Activated CD8-positive, alpha-beta memory T cell treated with anti-CD3 and anti-CD28 coated beads, Interleukin-2, amount 10 ng/mL, durations not matched to agents 7 days and 5 days (primary cell): ENCODE measurements at regions of chr4 and their contacts with region 1.

Region 1: GRCh38 chr4:140085062-140085622 is 68.8 kb downstream of the MAML3 start:
- DNase-seq: no peak
- ATAC-seq: no peak
- H3K4me3 Mint-ChIP-seq: no peak overlapping the region
- H3K27ac Mint-ChIP-seq: no peak overlapping the region
- H3K4me1 Mint-ChIP-seq: peaks cover 20% of the 10 kb centered on the region
- H3K27me3 Mint-ChIP-seq: no peaks in the 10 kb centered on the region

Region 2: GRCh38 chr4:140071806-140072205 is 13.3 kb before region 1 on chr4:
- CTCF ChIA-PET with region 1: interaction called, 12 read pairs
- DNase-seq: peak; percentile 90
- ATAC-seq: peak; percentile 79
- H3K4me3 Mint-ChIP-seq: peak overlapping the region; percentile 61
- H3K27ac Mint-ChIP-seq: peak overlapping the region; percentile 86
- H3K4me1 Mint-ChIP-seq: peaks cover 51% of the 10 kb centered on the region
- H3K27me3 Mint-ChIP-seq: peaks cover 41% of the 10 kb centered on the region

Region 3: DNA sequence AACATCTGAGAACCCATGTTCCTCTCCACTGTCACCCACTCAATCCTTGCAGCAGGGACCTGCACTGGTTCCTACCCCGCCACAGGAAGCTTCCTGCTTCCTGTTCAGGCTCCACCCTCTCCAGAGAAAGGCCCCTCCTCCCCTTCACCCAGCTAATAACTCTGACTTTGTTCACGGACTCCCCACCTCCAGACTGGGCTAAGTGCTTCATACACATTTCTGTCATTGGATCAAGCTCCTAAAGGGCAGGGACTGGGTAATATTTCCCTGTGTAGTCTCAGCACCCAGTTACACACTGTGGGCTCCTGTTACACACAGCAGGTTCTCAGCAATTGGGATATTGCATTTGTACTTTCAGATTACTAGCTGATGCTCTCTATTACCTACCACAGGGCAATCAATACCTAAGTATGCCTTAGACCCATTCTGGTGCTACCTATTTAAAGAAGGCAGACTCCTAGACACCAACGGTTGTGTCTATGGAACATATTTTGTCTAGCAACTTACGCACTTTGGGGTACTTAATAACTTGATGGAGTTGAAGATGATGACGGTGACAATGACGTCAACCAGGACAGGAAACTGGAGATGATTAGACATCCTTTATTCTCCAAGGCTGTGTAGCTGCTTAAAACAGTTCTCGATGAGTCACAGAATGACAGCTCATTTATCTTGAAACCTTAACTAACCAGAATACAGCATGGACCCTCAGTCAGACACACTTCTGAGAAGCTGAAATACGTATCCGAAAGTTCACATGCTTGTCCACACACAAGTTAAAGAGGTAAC is 10.7 kb after region 1 on chr4:
- CTCF ChIA-PET with region 1: interaction called, 12 read pairs
- DNase-seq: peak; percentile 85
- ATAC-seq: peak; percentile 86
- H3K4me3 Mint-ChIP-seq: peak overlapping the region; percentile 75
- H3K27ac Mint-ChIP-seq: peak overlapping the region; percentile 94
- H3K4me1 Mint-ChIP-seq: peaks cover 91% of the 10 kb centered on the region
- H3K27me3 Mint-ChIP-seq: no peaks in the 10 kb centered on the region